K562 (cell line): ENCODE measurements at regions of chr11 and their contacts with region 1.

Region 1: DNA sequence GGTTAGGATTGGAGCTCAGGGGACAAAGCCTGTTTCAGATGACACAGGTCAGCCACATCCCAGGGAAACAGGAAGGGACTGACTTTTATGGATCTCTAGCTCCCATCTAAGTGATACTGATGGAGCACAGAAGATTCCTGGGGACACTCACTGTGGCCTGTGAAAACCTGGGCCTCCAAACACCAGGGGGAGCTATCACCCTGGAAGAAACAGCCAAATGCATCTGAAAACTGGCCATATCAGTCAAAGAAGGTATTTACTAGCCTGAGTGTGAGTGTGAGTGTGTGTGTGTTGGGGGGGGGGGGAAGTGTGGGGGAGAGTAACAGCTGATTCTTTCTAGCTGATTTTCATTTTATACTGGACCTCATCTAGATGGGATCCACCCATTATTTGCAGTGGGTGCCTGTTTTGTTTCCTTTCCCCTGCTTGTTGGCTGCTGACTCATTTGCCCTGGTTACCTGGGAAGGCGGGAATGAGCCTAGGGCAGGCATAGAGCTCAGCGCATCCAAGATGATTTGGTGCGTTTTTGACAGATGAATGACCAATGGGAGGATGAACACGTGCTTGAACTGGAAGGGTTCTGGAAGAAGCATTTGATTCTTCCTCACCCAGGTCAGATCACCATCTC is 284.0 kb downstream of the KIRREL3 start:
- DNase-seq: peak; percentile 46 to 56 (median 50)
- ATAC-seq: peak; percentile 82
- H3K4me3 ChIP-seq: no peak overlapping the region
- H3K27ac ChIP-seq: no peak overlapping the region
- H3K4me1 ChIP-seq: peaks cover 0 to 7% of the 10 kb centered on the region in 2 experiments; a peak in 2 of 5 replicates
- H3K27me3 ChIP-seq: peaks cover 0 to 25% of the 10 kb centered on the region in 2 experiments; a peak in 2 of 5 replicates
- CTCF ChIP-seq: peak; percentile 61 to 74 (median 62)
- EP300 ChIP-seq: no peak
- POLR2A ChIP-seq: no peak
- RAD21 ChIP-seq: peak; percentile 31 to 65; a peak in 3 of 4 replicates

Region 2: DNA sequence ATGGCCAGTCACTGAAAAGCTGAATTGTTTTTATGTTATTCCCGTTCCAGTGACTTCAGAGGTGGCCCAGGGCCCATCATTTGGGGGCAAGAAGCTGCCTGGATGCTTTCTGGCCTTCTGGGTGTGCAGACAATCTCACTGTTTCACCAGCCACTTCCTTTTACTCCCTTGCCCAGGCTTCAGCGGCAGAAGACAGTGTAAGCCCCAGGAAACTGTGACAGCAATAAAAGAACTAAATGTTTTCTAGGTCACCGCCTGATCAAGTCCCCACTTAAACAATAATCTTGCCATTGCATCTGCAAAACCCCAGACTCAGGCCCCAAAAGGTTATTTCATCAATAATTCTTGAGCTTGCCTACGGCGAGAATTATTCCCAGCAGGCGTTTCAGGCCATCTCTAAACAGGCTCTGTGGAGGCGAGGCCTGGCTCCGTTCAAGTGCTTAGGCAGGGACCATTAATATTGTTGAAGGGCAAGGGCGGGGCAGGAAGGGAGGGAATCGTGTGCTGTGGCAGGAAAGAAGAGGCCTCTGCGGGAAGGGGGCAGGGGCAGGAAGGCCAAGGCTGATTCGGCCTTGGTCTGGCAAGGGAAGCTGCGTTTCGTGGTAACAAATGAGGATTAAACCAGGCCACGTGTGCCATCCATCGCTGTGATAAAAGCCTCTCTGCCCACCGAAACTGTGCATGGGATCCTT is 31.7 kb after region 1 on chr11:
- CTCF ChIA-PET with region 1: no interaction called
- POLR2A ChIA-PET with region 1: no interaction called
- in situ Hi-C with region 1: no loop called
- intact Hi-C with region 1: no loop called
- DNase-seq: no peak
- ATAC-seq: no peak
- H3K4me3 ChIP-seq: no peak overlapping the region
- H3K27ac ChIP-seq: no peak overlapping the region
- H3K4me1 ChIP-seq: no peaks in the 10 kb centered on the region
- H3K27me3 ChIP-seq: peaks cover 11 to 19% of the 10 kb centered on the region in 2 experiments; a peak in 3 of 5 replicates
- CTCF ChIP-seq: no peak
- EP300 ChIP-seq: no peak
- POLR2A ChIP-seq: no peak
- RAD21 ChIP-seq: no peak

Region 3: DNA sequence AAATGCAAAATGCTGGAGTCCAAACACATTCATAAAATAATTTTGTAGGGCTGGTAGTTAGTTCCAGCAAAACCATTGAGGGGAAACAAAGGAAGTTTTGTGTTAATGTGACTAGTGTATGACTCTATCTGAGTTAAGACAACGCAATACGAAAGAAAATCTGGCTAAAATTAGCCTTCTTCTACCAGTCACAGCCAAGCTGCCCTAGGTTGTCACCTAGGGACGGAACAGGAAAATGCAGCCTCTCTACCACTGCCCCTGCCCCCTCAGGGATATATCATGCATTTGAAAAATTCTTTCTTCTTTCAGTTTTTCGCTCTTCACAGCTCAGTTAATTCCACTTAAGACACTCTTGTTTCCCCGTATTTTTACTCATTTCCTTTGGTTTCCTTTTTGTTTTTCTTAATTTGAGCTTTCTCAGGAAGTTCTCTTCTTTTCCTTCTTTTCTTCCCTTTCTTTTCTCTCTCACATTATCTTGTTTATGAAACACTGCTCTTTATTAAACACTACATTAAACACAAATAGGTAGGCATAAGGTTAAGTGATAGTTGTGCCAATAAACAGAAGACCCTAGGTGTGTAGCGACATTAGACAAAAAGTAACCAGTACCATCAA is 253.4 kb after region 1 on chr11:
- CTCF ChIA-PET with region 1: no interaction called
- POLR2A ChIA-PET with region 1: no interaction called
- in situ Hi-C with region 1: loop called (anchors 25 kb)
- intact Hi-C with region 1: loop called (anchors 5 kb)
- DNase-seq: peak in 3 of 4 experiments; percentile 8 to 16 (median 9)
- ATAC-seq: peak; percentile 86
- H3K4me3 ChIP-seq: no peak overlapping the region
- H3K27ac ChIP-seq: no peak overlapping the region
- H3K4me1 ChIP-seq: no peaks in the 10 kb centered on the region
- H3K27me3 ChIP-seq: peaks cover 0 to 8% of the 10 kb centered on the region in 2 experiments; a peak in 1 of 5 replicates
- CTCF ChIP-seq: peak; percentile 14 to 42 (median 41); a peak in 3 of 6 replicates
- EP300 ChIP-seq: no peak
- POLR2A ChIP-seq: no peak
- RAD21 ChIP-seq: peak in 1 of 2 experiments; percentile 37; a peak in 2 of 4 replicates

Region 4: DNA sequence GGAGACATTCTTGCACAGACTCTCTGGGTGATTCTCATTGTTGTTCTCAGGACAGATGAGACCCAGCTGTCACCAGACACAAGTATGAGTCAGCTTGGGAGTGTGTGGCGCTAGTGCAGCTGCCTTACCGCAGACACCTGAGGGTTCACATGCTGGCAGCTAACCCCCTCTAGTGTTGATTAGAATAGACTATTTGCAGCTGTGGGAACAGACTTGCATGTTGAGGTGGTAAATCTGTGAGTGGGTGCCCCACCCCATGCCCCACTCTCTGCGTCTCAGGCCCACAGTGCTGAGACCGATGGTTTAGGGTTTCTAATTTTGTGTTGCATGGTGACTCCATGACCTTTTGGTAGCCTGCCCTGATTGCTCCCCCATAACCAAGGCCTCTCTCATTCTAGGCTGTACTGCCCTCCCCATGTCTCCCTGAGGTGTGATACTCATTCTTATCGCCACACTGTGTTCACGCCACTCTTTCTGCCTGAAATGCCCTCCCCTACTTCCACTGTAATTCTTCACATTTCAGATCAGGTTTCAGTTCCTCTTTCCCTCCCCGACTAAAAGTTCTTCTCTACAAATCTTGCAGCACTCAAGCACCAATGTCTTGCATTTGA is 357.7 kb after region 1 on chr11:
- CTCF ChIA-PET with region 1: no interaction called
- POLR2A ChIA-PET with region 1: no interaction called
- in situ Hi-C with region 1: no loop called
- intact Hi-C with region 1: loop called (anchors 2 kb)
- DNase-seq: peak; percentile 15 to 39 (median 20)
- ATAC-seq: peak; percentile 84
- H3K4me3 ChIP-seq: no peak overlapping the region
- H3K27ac ChIP-seq: no peak overlapping the region
- H3K4me1 ChIP-seq: no peaks in the 10 kb centered on the region
- H3K27me3 ChIP-seq: no peaks in the 10 kb centered on the region
- CTCF ChIP-seq: peak; percentile 44 to 51 (median 50); a peak in 5 of 6 replicates
- EP300 ChIP-seq: no peak
- POLR2A ChIP-seq: no peak
- RAD21 ChIP-seq: peak in 1 of 2 experiments; percentile 39; a peak in 2 of 4 replicates